H1 (cell line): ENCODE measurements at regions of chr5 and their contacts with region 1.

Region 1: GRCh38 chr5:77230721-77231470 is 20.4 kb downstream of the PDE8B start:
- DNase-seq: no peak
- H3K4me3 ChIP-seq: no peak overlapping the region
- H3K27ac ChIP-seq: no peak overlapping the region
- H3K4me1 ChIP-seq: no peaks in the 10 kb centered on the region
- H3K27me3 ChIP-seq: no peaks in the 10 kb centered on the region; a peak in 1 of 7 replicates
- CTCF ChIP-seq: peak in 2 of 3 experiments; percentile 39 to 42; a peak in 3 of 4 replicates
- EP300 ChIP-seq: no peak
- POLR2A ChIP-seq: no peak
- RAD21 ChIP-seq: peak; percentile 44 to 45; a peak in 3 of 4 replicates

Region 2: DNA sequence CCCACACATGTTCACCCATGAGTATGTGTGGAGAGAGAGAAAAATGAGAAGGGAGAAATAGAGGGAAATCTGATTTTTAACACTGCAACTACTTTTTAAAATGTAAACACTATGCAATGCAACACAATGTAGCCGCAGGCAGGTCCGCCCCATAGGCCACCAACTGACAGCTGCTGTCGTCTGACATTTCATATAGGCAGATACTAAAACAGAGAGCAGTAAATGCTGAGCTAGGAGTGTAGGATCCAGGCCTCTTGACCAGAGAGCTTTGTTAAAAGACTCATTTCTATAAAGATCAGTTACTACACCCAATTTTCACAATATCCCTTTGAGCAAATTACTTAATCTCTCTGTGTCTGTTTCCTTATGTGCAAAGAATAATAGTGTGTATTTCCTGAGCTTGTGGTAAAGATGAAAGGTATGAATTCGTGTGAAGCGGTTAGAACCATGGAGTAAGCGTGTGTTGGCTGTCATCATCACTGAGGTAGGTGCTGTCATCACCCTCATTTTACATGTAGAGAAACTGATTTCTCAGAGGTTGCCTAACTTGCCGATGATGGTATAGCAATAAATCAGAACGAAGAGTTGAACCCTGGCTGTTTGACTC is 75.6 kb before region 1 on chr5:
- CTCF ChIA-PET with region 1: no interaction called
- POLR2A ChIA-PET with region 1: no interaction called
- DNase-seq: no peak
- H3K4me3 ChIP-seq: no peak overlapping the region
- H3K27ac ChIP-seq: no peak overlapping the region
- H3K4me1 ChIP-seq: peaks cover 0 to 6% (median 2%) of the 10 kb centered on the region in 4 experiments; a peak in 3 of 7 replicates
- H3K27me3 ChIP-seq: no peaks in the 10 kb centered on the region
- CTCF ChIP-seq: no peak
- EP300 ChIP-seq: no peak
- POLR2A ChIP-seq: no peak
- RAD21 ChIP-seq: no peak

Region 3: GRCh38 chr5:77218263-77218662 is 12.6 kb before region 1 on chr5:
- CTCF ChIA-PET with region 1: interaction called, 13 read pairs
- POLR2A ChIA-PET with region 1: no interaction called
- DNase-seq: no peak
- H3K4me3 ChIP-seq: no peak overlapping the region
- H3K27ac ChIP-seq: no peak overlapping the region
- H3K4me1 ChIP-seq: no peaks in the 10 kb centered on the region
- H3K27me3 ChIP-seq: no peaks in the 10 kb centered on the region; a peak in 1 of 7 replicates
- CTCF ChIP-seq: peak; percentile 29 to 61 (median 46); a peak in 3 of 4 replicates
- EP300 ChIP-seq: no peak
- POLR2A ChIP-seq: no peak
- RAD21 ChIP-seq: peak in 1 of 2 experiments; percentile 36; a peak in 1 of 4 replicates

Region 4: GRCh38 chr5:77367733-77368132 is 136.8 kb after region 1 on chr5:
- CTCF ChIA-PET with region 1: no interaction called
- POLR2A ChIA-PET with region 1: no interaction called
- DNase-seq: no peak
- H3K4me3 ChIP-seq: no peak overlapping the region
- H3K27ac ChIP-seq: no peak overlapping the region
- H3K4me1 ChIP-seq: no peaks in the 10 kb centered on the region; a peak in 2 of 7 replicates
- H3K27me3 ChIP-seq: no peaks in the 10 kb centered on the region
- CTCF ChIP-seq: no peak
- EP300 ChIP-seq: no peak
- POLR2A ChIP-seq: no peak
- RAD21 ChIP-seq: no peak